Activated naive CD4-positive, alpha-beta T cell treated with anti-CD3 and anti-CD28 coated beads for 36 hours (primary cell): ENCODE measurements at regions of chr2 and their contacts with region 1.

Region 1: DNA sequence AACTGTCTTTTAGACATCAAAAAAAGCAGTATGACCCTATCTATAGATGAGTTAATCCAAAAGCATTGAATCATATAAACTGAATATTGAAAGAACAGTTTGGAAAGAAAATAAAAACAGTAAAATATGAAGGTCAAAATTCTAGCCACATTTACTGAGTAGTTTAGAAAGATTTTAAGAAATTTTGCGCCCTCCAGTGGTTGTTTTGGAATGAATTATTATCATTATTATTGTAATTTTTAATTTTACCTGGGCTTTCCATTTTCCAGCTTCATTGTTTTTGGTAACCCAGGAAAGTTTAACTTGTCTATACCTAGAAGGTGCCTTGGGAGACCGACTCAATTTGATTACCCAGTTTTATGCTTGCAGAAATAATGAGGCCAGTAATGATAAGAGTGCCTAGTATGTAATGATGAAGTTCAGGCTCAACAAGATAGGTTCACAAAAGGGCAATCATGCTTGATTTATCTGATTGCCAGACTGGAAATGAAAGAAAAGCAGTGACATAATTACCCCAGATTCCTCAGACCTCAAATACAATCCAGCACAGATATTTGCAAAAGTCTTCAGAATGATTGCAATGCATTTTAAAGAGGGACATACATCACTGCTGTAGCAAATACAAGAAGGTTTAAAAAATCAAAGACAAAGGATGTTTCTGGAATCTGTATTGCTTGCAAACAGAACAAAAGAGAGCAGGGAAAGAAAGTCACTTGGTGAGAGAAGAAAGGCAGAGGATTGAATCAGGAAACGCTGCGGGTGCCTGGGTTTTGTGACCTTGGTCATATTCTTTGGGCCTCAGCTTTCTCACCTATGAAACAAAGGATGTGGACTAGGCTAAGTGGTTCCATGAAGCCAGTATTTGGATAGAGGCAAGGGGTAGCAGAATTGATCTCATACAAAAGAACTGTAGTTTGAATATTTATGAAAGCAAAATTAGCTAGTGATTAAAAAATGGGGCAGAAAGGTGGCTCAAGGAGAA is 153.8 kb downstream of the MAP2 start:
- DNase-seq: no peak
- H3K4me3 Mint-ChIP-seq: no peak overlapping the region
- H3K27ac Mint-ChIP-seq: no peak overlapping the region
- H3K4me1 Mint-ChIP-seq: peaks cover 6% of the 10 kb centered on the region
- H3K27me3 Mint-ChIP-seq: peaks cover 3% of the 10 kb centered on the region

Region 2: GRCh38 chr2:208407667-208408066 is 1170.0 kb before region 1 on chr2:
- CTCF ChIA-PET with region 1: no interaction called
- intact Hi-C with region 1: loop called (anchors 10 kb)
- DNase-seq: peak; percentile 20
- H3K4me3 Mint-ChIP-seq: no peak overlapping the region
- H3K27ac Mint-ChIP-seq: no peak overlapping the region
- H3K4me1 Mint-ChIP-seq: peaks cover 10% of the 10 kb centered on the region
- H3K27me3 Mint-ChIP-seq: peaks cover 44% of the 10 kb centered on the region

Region 3: DNA sequence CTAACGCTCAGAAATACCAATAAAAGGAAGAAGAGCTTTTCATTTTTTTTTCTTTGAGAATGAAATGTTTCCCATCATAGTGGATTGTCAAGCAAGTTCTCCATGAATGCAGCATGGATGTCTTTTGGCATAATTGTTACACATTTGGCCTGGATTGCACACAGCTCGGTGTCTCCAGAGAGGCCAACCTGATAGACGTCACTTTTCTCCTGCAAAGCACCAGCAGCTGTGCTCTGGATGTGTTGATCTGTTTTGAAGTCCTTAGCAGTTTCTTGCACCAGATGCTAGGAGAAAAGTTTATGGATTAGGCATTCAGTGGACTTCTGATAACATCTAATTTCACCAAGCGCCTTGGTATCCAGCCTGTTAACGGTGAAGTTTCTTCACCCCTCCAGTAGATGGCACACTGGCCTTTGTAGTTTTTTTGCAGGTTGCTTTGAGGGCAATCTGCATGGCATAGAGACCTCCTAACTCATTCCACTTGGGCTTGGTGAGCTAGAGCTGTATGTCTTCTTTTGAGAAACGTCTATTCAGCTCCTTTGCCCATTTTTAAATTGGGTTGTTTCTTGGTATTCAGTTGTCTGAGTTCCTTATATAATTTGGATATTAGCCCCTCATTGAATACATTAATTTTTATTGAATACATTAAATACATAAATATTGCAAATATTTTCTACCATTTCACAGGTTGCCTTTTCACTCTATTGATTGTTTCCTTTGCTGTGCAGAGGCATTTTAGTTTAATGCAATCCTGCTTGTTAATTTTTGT is 1111.3 kb before region 1 on chr2:
- CTCF ChIA-PET with region 1: no interaction called
- intact Hi-C with region 1: loop called (anchors 10 kb)
- DNase-seq: peak; percentile 36
- H3K4me3 Mint-ChIP-seq: no peak overlapping the region
- H3K27ac Mint-ChIP-seq: no peak overlapping the region
- H3K4me1 Mint-ChIP-seq: no peaks in the 10 kb centered on the region
- H3K27me3 Mint-ChIP-seq: peaks cover 2% of the 10 kb centered on the region

Region 4: DNA sequence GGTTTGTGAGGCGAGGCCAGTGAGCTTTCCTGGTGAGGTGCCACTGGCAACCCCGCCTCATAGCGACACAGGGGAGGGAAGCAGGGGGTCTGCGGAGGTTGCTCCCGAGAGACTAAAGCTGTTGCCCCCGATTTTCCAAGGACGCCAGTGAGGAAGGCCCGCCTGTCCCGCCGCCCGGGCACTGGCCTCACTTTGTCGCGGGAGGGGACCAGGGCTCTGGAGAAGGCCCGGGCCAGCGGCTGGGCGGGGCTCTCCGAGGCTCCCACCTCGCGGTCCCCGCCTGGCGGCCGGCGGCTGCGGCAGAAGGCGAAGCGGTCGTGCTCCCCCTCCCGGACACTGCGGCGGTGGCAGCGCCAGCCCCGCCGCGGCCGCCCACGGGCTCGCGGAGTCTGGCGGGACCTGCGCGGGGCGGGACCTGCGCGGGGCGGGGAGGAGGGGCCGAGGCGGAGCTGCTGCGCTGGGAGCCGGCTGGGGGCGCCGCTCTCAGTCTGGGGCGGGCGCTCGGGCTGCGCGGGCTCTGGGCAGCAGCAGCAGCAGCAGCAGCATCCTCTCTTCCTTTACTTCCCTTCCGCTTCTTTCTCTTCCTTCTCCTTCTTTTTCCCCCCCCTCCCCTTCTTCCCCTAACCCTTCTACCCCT is 154.0 kb before region 1 on chr2 and contains the start of gene MAP2:
- CTCF ChIA-PET with region 1: interaction called, 4 read pairs
- intact Hi-C with region 1: loop called (anchors 1 kb)
- DNase-seq: peak; percentile 74
- H3K4me3 Mint-ChIP-seq: peak within 1 kb of the TSS; percentile 73
- H3K27ac Mint-ChIP-seq: no peak within 1 kb of the TSS
- H3K4me1 Mint-ChIP-seq: peaks cover 12% of the 10 kb centered on the region
- H3K27me3 Mint-ChIP-seq: peaks cover 42% of the 10 kb centered on the region
- total RNA-seq, gene MAP2: 0.20 to 0.67 TPM

Region 5: GRCh38 chr2:209960676-209961630 is 383.3 kb after region 1 on chr2:
- CTCF ChIA-PET with region 1: no interaction called
- intact Hi-C with region 1: loop called (anchors 5 kb)
- DNase-seq: peak; percentile 63
- H3K4me3 Mint-ChIP-seq: no peak overlapping the region
- H3K27ac Mint-ChIP-seq: no peak overlapping the region
- H3K4me1 Mint-ChIP-seq: no peaks in the 10 kb centered on the region
- H3K27me3 Mint-ChIP-seq: no peaks in the 10 kb centered on the region